ENCODE measurements at regions of chrX and their contacts with region 1.

Region 1: DNA sequence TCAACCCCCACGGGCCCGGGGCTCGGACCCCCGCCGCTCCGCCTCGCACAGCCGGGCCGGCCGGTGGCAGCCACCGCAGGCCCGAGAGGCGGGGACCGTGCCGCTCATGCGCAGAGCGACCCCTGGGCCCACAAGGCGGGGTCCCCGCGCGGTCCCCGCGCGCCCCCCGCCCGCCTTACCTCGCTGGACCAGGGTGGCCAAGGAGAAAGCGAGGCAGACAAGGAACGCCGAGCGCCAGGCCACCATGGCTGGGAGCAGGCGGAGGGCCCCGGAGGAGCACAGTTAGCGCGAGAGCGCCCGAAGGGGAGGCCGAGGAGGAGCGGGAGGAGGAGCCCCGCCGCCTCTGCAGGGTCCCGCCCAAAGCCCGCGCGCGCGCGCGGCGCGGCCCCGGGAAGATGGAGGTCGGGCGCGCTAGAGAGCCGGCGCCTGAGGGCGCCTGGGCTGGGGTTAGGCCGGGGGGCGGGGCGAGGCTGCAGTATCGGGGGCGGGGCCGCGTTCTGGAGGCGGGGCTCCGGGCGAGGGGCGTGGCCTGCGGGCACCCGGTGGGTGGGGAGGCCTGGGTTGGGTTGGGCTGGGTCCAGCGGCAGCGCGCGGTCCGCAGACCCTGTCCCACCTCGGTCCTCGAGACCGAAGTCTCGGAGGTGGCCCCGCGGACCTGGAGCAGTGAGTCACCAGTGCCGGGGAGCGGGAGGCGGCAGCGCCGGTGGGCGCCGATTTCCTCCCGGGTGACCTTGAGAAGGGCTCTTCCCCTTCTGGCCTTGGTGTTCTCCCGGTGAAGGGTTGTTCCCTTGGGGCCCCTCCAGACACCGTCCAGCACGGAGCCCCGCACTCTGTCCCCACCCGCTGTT is at the start of gene CD99L2:
- DNase-seq: peak; percentile 92
- H3K4me3 ChIP-seq: peak within 1 kb of the TSS; percentile 60 to 78 (median 72)
- H3K27ac ChIP-seq: peak within 1 kb of the TSS; percentile 79 to 84 (median 82)
- H3K4me1 ChIP-seq: peaks cover 0 to 7% (median 7%) of the 10 kb centered on the region in 4 donors
- H3K27me3 ChIP-seq: no peaks in the 10 kb centered on the region
- CTCF ChIP-seq: no peak
- EP300 ChIP-seq: no peak
- POLR2A ChIP-seq: no peak
- total RNA-seq, gene CD99L2: 61.0 to 91.5 (median 70.1) TPM

Region 2: DNA sequence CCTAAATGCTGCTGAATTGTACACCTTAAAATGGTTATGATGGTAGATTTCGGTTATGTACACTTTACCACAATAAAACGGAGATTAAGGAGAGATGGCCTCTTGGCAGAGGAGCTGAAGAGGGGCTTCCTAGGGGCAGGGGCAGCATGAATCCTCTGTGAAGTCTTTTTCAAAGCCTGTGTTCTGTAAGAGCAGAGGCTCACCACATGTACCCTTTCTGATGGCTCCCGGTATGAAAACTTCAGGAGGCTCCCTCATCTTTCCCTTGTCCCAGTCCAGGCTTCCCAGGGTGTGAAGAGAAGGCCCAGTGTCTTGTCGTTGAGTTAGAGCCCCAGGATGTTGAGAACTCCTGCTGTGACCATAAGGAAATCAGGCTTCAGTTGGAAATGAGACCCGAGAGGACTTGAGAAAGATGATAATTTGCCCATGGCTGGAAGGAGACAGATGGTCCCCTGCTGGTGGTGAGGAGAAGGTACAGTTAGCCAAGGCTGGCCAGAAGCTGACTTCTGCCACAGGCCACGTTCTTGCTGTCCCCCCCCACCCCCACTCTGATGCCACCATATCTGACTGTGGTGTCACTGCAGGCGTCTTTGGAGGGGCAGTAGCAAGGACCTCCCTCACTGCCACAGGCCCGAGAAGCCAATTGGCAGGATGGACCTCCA is 362.0 kb before region 1 on chrX:
- intact Hi-C with region 1: no loop called
- DNase-seq: no peak
- H3K4me3 ChIP-seq: no peak overlapping the region
- H3K27ac ChIP-seq: no peak overlapping the region
- H3K4me1 ChIP-seq: no peaks in the 10 kb centered on the region
- H3K27me3 ChIP-seq: no peaks in the 10 kb centered on the region
- CTCF ChIP-seq: no peak
- EP300 ChIP-seq: no peak
- POLR2A ChIP-seq: no peak

Region 3: GRCh38 chrX:150982788-150983520 is 84.4 kb after region 1 on chrX and contains the start of gene HMGB3:
- intact Hi-C with region 1: loop called (anchors 5 kb)
- DNase-seq: peak; percentile 92
- H3K4me3 ChIP-seq: peak within 1 kb of the TSS; percentile 55 to 68 (median 59)
- H3K27ac ChIP-seq: peak within 1 kb of the TSS; percentile 49 to 65 (median 62)
- H3K4me1 ChIP-seq: peaks cover 0 to 14% (median 9%) of the 10 kb centered on the region in 4 donors
- H3K27me3 ChIP-seq: no peaks in the 10 kb centered on the region
- CTCF ChIP-seq: no peak
- EP300 ChIP-seq: no peak
- POLR2A ChIP-seq: no peak
- total RNA-seq, gene HMGB3: 2.1 to 3.0 (median 2.7) TPM